ENCODE measurements at regions of chr10 and their contacts with region 1.

Region 1: GRCh38 chr10:66941491-66941890 is 15.7 kb downstream of the LRRTM3 start:
- DNase-seq: no peak
- H3K4me3 Mint-ChIP-seq: no peak overlapping the region
- H3K27ac Mint-ChIP-seq: no peak overlapping the region
- H3K4me1 Mint-ChIP-seq: no peaks in the 10 kb centered on the region
- H3K27me3 Mint-ChIP-seq: peaks cover 29% of the 10 kb centered on the region
- CTCF ChIP-seq: no peak

Region 2: DNA sequence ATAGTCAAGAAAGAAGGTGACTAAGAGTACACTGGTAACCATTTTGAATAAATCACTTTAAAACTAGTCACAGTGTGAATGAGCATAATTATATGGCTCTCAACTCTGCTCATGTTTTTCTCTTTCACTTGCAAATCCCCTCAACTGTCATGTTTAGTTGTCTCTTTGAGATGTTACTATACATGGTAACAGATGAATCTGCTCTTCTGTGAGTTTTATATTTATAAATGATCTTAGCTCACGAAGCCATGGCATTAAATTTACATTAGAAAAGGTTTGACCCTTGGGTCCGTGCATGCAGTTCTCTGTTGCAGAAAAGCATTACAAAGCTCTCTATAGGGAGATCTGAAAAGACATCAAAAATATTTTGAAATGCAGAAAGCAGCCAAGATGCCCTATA is 48.6 kb before region 1 on chr10:
- CTCF ChIA-PET with region 1: no interaction called
- POLR2A ChIA-PET with region 1: no interaction called
- intact Hi-C with region 1: no loop called
- DNase-seq: no peak
- H3K4me3 Mint-ChIP-seq: no peak overlapping the region
- H3K27ac Mint-ChIP-seq: no peak overlapping the region
- H3K4me1 Mint-ChIP-seq: no peaks in the 10 kb centered on the region
- H3K27me3 Mint-ChIP-seq: no peaks in the 10 kb centered on the region
- CTCF ChIP-seq: no peak

Region 3: DNA sequence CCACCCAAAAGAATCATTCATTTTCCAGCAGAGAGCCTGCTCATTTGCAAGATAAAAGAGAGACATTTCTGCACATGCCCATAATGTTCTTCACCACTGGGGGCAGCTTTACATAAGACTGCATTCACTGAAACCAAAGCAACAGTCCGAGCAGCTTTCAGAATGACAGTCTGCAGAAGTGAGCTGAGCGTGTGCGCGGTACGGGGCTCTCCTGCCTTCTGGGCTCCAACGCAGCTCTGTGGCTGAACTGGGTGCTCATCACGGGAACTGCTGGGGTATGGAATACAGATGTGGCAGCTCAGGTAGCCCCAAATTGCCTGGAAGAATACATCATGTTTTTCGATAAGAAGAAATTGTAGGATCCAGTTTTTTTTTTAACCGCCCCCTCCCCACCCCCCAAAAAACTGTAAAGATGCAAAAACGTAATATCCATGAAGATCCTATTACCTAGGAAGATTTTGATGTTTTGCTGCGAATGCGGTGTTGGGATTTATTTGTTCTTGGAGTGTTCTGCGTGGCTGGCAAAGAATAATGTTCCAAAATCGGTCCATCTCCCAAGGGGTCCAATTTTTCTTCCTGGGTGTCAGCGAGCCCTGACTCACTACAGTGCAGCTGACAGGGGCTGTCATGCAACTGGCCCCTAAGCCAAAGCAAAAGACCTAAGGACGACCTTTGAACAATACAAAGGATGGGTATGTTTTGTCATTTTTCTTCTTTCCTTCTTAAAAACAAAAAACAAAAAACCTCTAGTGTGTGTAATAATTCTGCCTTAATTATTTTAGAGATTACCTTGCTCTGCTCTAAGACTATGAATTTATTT is 15.4 kb before region 1 on chr10 and contains the start of gene LRRTM3:
- CTCF ChIA-PET with region 1: interaction called, 10 read pairs
- POLR2A ChIA-PET with region 1: interaction called, 5 read pairs
- intact Hi-C with region 1: no loop called
- DNase-seq: peak; percentile 81
- H3K4me3 Mint-ChIP-seq: peak within 1 kb of the TSS; percentile 33
- H3K27ac Mint-ChIP-seq: no peak within 1 kb of the TSS
- H3K4me1 Mint-ChIP-seq: peaks cover 6% of the 10 kb centered on the region
- H3K27me3 Mint-ChIP-seq: peaks cover 23% of the 10 kb centered on the region
- CTCF ChIP-seq: peak; percentile 45
- total RNA-seq, gene LRRTM3: not detected in 2 replicates

Region 4: GRCh38 chr10:67115970-67116369 is 174.5 kb after region 1 on chr10:
- CTCF ChIA-PET with region 1: no interaction called
- POLR2A ChIA-PET with region 1: no interaction called
- intact Hi-C with region 1: no loop called
- DNase-seq: peak; percentile 75
- H3K4me3 Mint-ChIP-seq: no peak overlapping the region
- H3K27ac Mint-ChIP-seq: no peak overlapping the region
- H3K4me1 Mint-ChIP-seq: no peaks in the 10 kb centered on the region
- H3K27me3 Mint-ChIP-seq: peaks cover 23% of the 10 kb centered on the region
- CTCF ChIP-seq: no peak

Region 5: GRCh38 chr10:67306588-67307205 is 365.2 kb after region 1 on chr10:
- CTCF ChIA-PET with region 1: interaction called, 3 read pairs
- POLR2A ChIA-PET with region 1: no interaction called
- intact Hi-C with region 1: loop called (anchors 5 kb)
- DNase-seq: peak; percentile 53
- H3K4me3 Mint-ChIP-seq: no peak overlapping the region
- H3K27ac Mint-ChIP-seq: no peak overlapping the region
- H3K4me1 Mint-ChIP-seq: no peaks in the 10 kb centered on the region
- H3K27me3 Mint-ChIP-seq: peaks cover 39% of the 10 kb centered on the region
- CTCF ChIP-seq: peak; percentile 55

Region 6: GRCh38 chr10:67506082-67506756 is 564.7 kb after region 1 on chr10:
- CTCF ChIA-PET with region 1: no interaction called
- POLR2A ChIA-PET with region 1: no interaction called
- intact Hi-C with region 1: loop called (anchors 5 kb)
- DNase-seq: no peak
- H3K4me3 Mint-ChIP-seq: no peak overlapping the region
- H3K27ac Mint-ChIP-seq: no peak overlapping the region
- H3K4me1 Mint-ChIP-seq: no peaks in the 10 kb centered on the region
- H3K27me3 Mint-ChIP-seq: no peaks in the 10 kb centered on the region
- CTCF ChIP-seq: no peak